Right ventricle myocardium inferior (tissue), 1 donor: ENCODE measurements at regions of chr6 and their contacts with region 1.

Region 1: GRCh38 chr6:5471044-5471443 is 209.7 kb downstream of the FARS2 start:
- DNase-seq: no peak
- ATAC-seq: peak; percentile 70

Region 2: DNA sequence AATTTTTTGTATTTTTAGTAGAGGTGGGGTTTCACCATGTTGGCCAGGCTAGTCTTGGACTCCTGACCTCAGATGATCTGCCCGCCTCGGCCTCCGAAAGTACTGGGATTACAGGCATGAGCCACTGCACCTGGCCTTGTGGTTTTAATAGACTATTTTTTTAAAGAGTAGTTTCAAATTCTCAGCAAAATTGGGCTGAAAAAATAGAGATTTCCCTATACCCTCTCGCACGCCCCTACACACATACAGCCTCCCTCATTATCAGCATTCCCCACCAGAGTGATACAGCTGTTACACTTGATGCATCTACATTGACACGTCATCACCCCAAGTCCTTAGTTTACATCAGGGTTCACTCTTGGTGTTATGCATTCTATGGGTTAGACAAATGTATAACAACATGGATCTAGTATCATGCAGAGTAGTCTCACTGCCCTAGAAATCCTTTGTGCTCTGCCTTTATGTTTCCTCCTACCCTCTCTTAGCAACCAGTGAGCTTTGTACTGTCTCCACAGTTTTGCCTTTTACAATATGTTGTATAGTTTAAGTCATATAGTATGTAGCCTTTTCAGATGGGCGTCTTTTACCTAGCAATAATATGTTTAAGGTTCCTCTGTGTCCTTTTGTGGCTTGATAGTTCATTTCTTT is 591.2 kb before region 1 on chr6:
- intact Hi-C with region 1: no loop called
- DNase-seq: no peak
- ATAC-seq: no peak

Region 3: DNA sequence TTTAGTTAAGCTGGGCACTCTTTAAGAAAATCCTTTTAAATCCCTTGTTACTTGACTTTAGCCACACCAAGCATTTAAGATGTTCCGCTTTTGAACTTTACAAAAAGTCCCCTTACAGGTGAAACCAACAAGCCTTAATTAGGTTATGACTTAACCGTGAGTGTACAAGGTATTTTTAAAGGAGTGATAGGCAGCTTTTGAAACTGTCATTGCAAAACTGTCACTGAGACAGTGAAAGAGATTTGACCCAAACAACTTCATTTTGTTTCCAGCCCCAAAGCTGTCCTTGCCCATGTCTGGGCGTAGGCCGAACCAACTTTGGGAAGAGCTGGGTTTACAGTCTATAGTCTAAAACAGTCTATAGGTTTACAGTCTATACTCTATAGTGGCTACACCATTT is 95.7 kb after region 1 on chr6:
- intact Hi-C with region 1: no loop called
- DNase-seq: no peak
- ATAC-seq: no peak

Region 4: GRCh38 chr6:5866547-5867101 is 395.6 kb after region 1 on chr6:
- intact Hi-C with region 1: loop called (anchors 10 kb)
- DNase-seq: no peak
- ATAC-seq: no peak

Region 5: DNA sequence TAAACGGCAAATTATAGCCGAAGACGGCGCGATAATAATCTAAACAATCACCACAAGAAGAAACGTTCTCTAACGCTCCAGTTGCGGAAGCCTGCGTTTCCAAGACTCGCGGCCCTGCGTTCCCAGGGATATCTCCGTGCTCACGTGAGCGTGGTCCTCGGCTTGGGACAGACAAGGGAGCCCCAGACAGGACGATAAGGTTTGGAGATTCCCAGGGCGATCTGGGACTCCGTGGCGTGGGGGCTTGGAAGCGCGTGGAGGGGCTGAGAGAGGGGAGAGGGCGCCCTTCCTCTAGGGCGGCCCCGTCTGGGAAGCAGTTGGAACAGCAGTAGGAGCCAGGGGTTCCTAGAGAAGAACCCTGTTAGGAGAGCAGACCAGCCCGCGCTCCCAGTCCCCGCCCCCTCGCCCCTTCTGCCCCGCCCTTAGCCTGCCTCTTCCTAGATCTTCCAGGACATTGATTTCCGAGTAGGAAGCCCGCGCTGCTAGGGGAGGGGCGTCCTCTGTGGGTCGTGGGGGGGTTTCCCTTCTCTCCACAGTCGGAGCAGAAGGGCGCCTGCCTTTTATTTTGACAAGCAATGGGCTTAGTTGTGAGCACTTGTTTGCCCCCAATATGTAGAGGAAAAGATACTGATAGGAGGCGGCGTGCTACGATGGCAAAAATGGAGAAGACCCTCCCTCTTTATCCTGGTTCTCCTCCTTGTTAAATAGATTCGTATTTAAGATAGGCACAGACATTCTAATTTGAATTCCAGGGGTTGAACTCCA is 525.1 kb after region 1 on chr6:
- intact Hi-C with region 1: loop called (anchors 10 kb)
- DNase-seq: no peak
- ATAC-seq: peak; percentile 62